ENCODE measurements at regions of chr22 and their contacts with region 1.

Region 1: DNA sequence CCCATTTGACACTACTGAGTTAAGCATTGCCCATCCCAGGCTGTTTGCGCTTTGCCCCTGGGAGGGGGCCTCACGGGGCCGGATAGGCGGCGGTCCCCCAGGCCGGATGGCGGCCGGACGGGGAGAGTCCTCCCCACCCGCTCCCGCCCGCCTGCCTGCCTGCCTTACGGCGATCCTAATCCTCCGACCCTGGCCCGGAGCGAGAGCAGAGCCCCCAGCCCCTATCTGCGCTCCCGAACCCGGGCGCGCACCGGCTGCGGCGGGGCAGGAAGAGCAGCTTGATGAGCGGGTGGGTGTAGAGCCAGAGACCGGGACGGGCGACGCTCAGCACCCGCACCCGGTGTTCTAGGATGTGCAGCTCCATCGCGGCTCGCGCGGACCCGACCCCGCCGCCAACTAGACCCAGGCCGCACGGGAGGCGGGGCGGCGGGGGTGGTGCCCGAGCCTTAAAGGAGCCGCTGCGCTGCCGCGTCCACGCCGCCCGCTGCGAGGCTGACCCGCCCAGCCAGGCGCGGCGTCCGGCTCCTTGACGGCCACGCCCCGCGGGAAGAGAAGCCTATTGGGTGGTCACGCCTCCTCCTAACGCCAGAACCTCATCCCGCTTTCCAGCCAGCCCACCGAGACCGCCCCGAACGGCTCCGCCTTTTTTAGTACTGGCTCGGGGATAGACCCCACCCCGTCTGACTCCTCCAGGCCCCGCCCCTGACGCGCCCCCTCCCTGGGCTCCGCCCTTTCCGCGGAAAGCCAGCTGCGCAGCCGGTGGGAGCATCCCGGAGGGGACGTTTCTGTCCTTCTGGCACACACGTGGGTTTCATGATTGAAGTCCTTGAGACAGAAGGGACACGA is at the start of gene CASTOR1:
- DNase-seq: peak; percentile 97
- H3K4me3 ChIP-seq: peak within 1 kb of the TSS; percentile 64 to 91 (median 71)
- H3K27ac ChIP-seq: peak within 1 kb of the TSS; percentile 22
- H3K4me1 ChIP-seq: peaks cover 35% of the 10 kb centered on the region
- H3K27me3 ChIP-seq: no peaks in the 10 kb centered on the region
- CTCF ChIP-seq: no peak
- total RNA-seq, gene CASTOR1: 8.7 to 9.7 TPM

Region 2: DNA sequence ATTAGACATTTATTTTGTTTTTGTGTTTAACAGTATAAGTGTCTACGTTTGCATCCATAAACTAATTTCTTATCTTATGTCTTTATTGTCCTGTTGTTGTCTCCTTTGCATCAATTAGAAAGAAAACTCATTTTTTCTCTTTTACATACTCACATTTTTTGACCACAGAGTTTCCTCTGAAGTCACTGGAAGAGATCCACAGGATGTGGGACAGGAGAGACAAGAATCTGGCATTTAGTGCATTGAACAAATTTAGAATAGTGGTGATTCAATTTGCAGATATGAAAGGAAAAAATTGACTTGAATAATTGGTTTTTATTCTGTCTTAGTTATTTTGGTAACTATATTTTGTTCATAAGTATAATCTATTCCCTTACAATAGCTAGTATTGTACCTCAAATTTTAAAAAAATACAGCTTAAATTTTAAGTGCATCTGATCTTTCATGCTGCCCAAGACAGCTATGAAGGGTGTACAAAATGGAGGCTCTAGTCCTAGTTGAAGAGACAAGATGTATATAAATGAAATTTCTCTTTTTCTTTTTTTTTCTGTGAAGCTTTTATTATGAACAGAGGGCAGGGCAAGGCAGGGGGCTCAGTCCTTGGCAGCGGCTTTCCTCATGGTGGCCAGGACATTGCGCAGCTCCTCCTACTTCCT is 184.7 kb before region 1 on chr22:
- CTCF ChIA-PET with region 1: interaction called, 3 read pairs
- dilution Hi-C with region 1: no loop called
- in situ Hi-C with region 1: loop called in 1 of 2 experiments (anchors 10 kb)
- intact Hi-C with region 1: loop called (anchors 1 kb)
- DNase-seq: no peak
- H3K4me3 ChIP-seq: no peak overlapping the region
- H3K27ac ChIP-seq: no peak overlapping the region
- H3K4me1 ChIP-seq: no peaks in the 10 kb centered on the region
- H3K27me3 ChIP-seq: no peaks in the 10 kb centered on the region
- CTCF ChIP-seq: no peak

Region 3: GRCh38 chr22:30245985-30246901 is 43.1 kb before region 1 on chr22 and contains the start of gene LIF:
- CTCF ChIA-PET with region 1: interaction called, 3 read pairs
- dilution Hi-C with region 1: loop called (anchors 5 kb)
- in situ Hi-C with region 1: no loop called
- intact Hi-C with region 1: no loop called
- DNase-seq: peak; percentile 76
- H3K4me3 ChIP-seq: peak within 1 kb of the TSS; percentile 74 to 80 (median 78)
- H3K27ac ChIP-seq: peak within 1 kb of the TSS; percentile 80
- H3K4me1 ChIP-seq: peaks cover 60% of the 10 kb centered on the region
- H3K27me3 ChIP-seq: no peaks in the 10 kb centered on the region
- CTCF ChIP-seq: peak in 1 of 2 donors; percentile 31
- total RNA-seq, gene LIF: 31.2 to 35.8 TPM

Region 4: DNA sequence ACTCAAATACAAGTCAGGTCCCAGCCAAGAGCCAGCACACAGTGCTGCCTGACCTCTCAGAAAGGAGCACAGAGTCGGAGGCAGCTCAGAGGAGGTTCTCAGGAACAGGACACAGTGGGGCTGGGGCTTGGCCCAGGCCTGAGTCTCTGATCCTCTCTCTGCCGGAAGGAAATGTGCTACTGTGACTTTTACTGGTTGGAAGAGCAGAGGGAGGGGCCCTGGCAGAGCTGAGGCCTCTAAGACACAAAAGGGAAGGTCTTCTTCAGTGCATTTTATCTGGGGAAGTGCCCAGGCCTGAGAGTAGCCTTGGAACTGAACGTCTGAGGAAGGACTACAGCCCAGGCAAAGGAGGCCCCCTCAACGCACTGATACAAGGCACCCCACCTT is 16.2 kb after region 1 on chr22:
- CTCF ChIA-PET with region 1: no interaction called
- dilution Hi-C with region 1: no loop called
- in situ Hi-C with region 1: no loop called
- intact Hi-C with region 1: loop called (anchors 2 kb)
- DNase-seq: no peak
- H3K4me3 ChIP-seq: no peak overlapping the region
- H3K27ac ChIP-seq: peak overlapping the region; percentile 34
- H3K4me1 ChIP-seq: peaks cover 88% of the 10 kb centered on the region
- H3K27me3 ChIP-seq: no peaks in the 10 kb centered on the region
- CTCF ChIP-seq: no peak

Region 5: GRCh38 chr22:30326706-30327362 is 37.5 kb after region 1 on chr22 and contains the start of gene TBC1D10A:
- CTCF ChIA-PET with region 1: interaction called, 24 read pairs
- dilution Hi-C with region 1: no loop called
- in situ Hi-C with region 1: loop called in 1 of 2 experiments (anchors 10 kb)
- intact Hi-C with region 1: loop called (anchors 1 kb)
- DNase-seq: peak; percentile 93
- H3K4me3 ChIP-seq: peak within 1 kb of the TSS; percentile 86 to 95 (median 89)
- H3K27ac ChIP-seq: peak within 1 kb of the TSS; percentile 67
- H3K4me1 ChIP-seq: peaks cover 31% of the 10 kb centered on the region
- H3K27me3 ChIP-seq: no peaks in the 10 kb centered on the region
- CTCF ChIP-seq: no peak
- total RNA-seq, gene TBC1D10A: 25.7 to 27.5 TPM

Region 6: GRCh38 chr22:30356449-30357235 is 67.3 kb after region 1 on chr22 and contains the starts of genes CCDC157 and SF3A1:
- CTCF ChIA-PET with region 1: no interaction called
- dilution Hi-C with region 1: no loop called
- in situ Hi-C with region 1: no loop called
- intact Hi-C with region 1: loop called (anchors 1 kb)
- DNase-seq: peak; percentile 91
- H3K4me3 ChIP-seq: peak within 1 kb of the TSS; percentile 75 to 89 (median 85)
- H3K27ac ChIP-seq: peak within 1 kb of the TSS; percentile 85
- H3K4me1 ChIP-seq: peaks cover 15% of the 10 kb centered on the region
- H3K27me3 ChIP-seq: no peaks in the 10 kb centered on the region
- CTCF ChIP-seq: no peak
- total RNA-seq, gene CCDC157: 1.9 to 3.2 TPM
- total RNA-seq, gene SF3A1: 45.0 to 163 TPM

Measured in mammary epithelial cell (primary cell).